Posterior cingulate gyrus (tissue), 11 donors: ENCODE measurements at regions of chr18 and their contacts with region 1.

Region 1: GRCh38 chr18:74342416-74343043 is 26.9 kb downstream of the C18orf63 start:
- DNase-seq: peak in 1 of 10 donors; percentile 23

Region 2: DNA sequence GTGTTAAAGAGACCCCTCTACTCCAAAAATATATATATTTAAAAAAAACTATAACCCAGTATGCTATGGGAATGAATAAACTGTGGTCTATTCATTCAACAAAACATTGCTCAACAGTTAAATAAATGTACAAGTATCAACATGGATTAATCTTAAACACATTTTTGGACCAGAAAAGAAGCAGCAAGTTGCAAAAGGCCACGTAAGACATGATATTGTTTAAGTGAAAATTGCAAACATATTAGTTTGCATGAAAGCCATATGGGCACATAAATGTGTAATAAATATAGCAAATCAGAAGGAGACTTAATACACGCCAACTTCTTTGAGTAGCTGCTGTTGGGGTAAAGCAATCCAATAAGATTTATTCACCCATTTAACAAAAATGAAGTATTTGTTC is 516.4 kb before region 1 on chr18:
- intact Hi-C with region 1: no loop called
- DNase-seq: no peak

Region 3: DNA sequence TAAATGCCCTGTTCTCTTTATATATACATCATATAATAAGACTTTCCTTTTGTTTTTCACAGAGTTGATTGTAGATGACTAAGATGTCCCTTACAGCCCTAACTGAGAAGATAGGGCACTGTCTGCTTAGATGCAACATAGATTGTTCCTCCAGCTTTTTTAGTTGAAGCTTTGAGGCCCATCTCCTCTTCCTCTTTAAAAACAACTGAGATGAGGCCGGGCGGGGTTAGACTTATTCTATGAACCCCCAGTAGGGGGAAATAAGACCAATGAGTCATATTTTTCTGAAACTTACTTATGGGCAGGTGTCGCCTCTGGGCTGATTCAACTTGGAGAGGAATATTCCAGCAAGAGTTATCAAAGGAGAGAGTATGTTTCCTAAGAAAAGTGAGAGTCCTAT is 279.5 kb before region 1 on chr18:
- intact Hi-C with region 1: no loop called
- DNase-seq: no peak

Region 4: DNA sequence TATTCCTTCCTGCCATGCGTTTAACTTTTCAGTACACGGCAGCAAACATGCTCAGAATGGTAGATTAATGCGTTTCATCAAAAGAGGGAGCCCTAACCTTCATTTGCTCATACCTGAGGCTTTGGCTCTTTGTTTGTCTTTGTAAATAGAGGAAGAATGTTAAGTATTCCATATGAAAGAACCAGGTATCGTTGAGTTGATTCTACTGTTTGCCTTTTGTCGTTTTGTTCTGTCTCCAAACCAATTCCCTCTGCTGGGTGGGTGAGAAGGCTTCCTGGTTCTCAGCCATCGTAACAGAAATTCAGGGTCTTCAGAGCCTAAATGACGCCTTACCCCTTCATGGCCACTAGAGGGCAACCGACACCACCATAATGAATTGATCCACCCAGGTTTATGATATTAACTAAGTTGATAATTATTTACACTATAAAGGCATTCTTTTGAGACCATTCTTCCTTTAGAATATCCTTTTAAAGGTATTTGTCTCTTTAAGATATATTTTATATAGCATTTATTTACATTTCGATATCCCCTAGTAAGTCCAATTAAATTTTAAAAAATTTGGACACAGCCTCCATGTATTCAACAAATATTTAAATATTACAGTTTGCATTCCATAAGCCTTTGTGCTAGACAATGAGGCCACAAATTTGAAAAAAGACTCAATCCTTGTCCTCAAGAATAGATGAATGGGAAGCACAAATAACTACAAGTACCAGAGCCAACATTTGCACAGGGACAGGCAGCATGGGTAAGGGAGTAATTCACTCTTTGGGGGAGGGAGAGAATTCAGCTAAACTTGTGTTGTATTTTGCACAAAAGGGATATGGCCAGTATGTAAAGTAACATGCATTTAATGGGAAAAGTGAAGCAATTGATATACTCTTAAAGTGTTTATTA is 146.1 kb before region 1 on chr18:
- intact Hi-C with region 1: loop called (anchors 1 kb)
- DNase-seq: peak in 2 of 10 donors; percentile 41 to 53

Region 5: DNA sequence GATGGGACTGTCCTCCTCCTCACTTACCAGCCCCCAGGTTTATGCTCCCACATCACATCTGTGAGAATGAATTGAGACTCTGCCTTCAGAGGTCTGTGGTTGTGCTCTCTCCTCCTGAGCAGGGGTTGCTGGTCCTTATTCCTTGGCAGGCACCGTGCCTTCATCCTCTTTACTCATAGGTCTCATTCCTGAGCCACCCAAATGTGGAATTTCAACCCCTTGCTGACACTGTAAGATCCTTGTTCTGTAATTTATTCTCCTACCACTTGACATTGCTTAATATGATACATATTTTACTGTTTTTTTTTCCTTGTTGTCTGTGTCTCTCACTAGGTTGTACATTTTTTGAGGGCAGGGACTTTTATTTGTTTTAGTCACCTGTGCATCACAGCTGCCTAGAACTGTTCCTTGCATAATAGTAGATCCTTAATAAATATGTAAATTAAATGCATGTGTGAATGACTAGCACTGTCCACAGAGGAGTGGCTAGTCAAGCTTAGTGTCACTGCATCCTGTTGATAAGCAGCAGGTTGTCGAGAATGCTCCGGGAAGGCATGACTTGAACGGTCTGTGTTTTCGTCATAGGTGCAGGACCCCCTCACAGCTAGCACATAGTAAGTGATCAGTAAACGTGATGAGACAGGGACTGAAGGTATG is 435.8 kb after region 1 on chr18:
- intact Hi-C with region 1: no loop called
- DNase-seq: no peak